HEK293 (cell line): ENCODE measurements at regions of chr7 and their contacts with region 1.

Region 1: GRCh38 chr7:29988424-29989256 is 961 bp downstream of the SCRN1 start:
- H3K4me3 ChIP-seq: peak overlapping the region; percentile 68
- H3K27ac ChIP-seq: peak overlapping the region; percentile 89
- H3K4me1 ChIP-seq: peaks cover 5% of the 10 kb centered on the region
- CTCF ChIP-seq: no peak

Region 2: DNA sequence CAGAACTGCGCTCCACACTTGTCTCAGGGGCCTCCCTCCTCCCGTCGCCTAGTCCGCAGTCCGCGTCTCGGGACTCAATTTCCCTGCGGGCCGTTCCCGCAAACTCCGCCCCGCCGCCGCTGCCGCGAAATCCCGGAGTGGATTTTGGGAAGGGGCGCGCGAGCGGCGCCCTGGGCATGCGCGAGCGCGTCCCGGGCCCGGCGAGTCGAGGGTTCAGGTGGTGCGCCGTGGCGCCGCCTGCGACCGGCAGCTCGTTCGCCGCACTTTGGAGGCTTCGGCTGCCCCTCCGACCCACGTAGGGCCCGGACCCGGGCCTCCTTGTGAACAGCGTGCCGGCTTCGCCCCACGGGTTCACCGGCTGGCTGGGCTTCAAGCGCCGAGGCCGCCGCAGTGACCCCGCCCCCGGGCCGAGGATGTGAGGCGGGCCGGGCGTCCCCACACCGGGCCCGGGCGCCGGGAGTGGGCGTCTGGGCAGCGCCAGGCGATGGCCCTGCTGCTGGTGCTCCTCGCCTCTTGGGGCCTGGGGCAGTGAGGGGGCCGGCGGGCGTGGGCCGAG is 39.6 kb after region 1 on chr7 and contains the start of gene PLEKHA8:
- CTCF ChIA-PET with region 1: no interaction called
- POLR2A ChIA-PET with region 1: interaction called, 12 read pairs
- H3K4me3 ChIP-seq: peak within 1 kb of the TSS; percentile 88
- H3K27ac ChIP-seq: peak within 1 kb of the TSS; percentile 76
- H3K4me1 ChIP-seq: peaks cover 14% of the 10 kb centered on the region
- CTCF ChIP-seq: no peak